ENCODE measurements at regions of chr10 and their contacts with region 1.

Region 1: DNA sequence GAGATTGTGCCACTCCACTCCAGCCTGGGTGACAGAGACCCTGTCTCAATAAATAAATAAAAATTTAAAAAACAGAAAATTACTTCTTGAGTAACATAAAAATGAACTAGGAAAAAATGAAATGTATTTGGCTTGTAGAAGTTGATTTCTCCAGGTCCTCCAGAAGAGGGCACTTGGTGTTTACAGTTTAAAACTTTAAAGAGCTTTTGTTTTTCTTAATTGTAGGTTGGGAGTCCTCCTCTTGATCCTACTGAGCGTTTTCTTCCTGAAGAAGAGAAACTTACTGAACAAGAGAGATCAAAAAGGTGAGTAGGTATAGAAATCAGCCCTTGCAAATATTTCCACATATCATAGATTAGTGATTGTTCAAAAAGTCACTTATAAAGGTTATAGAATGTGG is 16.2 kb downstream of the KIFBP start:
- DNase-seq: no peak
- ATAC-seq: peak; percentile 78
- H3K4me3 Mint-ChIP-seq: no peak overlapping the region
- H3K27ac Mint-ChIP-seq: no peak overlapping the region
- H3K4me1 Mint-ChIP-seq: peaks cover 10% of the 10 kb centered on the region
- H3K27me3 Mint-ChIP-seq: no peaks in the 10 kb centered on the region

Region 2: GRCh38 chr10:68955832-68956532 is 48.8 kb before region 1 on chr10 and contains the start of gene DDX21:
- CTCF ChIA-PET with region 1: no interaction called
- POLR2A ChIA-PET with region 1: no interaction called
- intact Hi-C with region 1: no loop called
- DNase-seq: peak; percentile 94
- ATAC-seq: peak; percentile 85
- H3K4me3 Mint-ChIP-seq: peak within 1 kb of the TSS; percentile 98
- H3K27ac Mint-ChIP-seq: peak within 1 kb of the TSS; percentile 100
- H3K4me1 Mint-ChIP-seq: peaks cover 35% of the 10 kb centered on the region
- H3K27me3 Mint-ChIP-seq: no peaks in the 10 kb centered on the region
- total RNA-seq, gene DDX21: 187 to 192 TPM

Region 3: DNA sequence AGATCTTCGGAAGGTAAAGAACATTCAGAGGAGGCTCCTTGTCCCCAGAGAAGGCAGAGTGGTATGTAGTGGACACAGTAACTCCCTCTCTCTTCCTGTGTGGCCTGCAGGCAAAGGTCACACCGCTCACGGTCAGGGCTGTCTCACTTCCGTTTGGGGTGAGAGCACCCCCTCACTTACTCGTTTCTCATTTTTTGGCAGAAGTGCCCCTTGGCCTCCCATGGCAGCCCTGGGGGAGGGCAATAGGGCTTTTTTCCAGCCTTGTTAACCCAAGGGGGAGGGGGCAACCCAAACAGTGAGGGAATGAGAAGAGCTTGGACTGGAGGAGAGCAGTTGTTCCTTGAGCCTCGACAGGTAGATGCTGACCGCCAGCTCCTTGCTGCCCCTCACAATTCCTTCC is 51.3 kb after region 1 on chr10:
- CTCF ChIA-PET with region 1: interaction called, 4 read pairs
- POLR2A ChIA-PET with region 1: no interaction called
- intact Hi-C with region 1: loop called in 1 of 2 experiments (anchors 2 kb)
- DNase-seq: peak; percentile 34
- ATAC-seq: no peak
- H3K4me3 Mint-ChIP-seq: no peak overlapping the region
- H3K27ac Mint-ChIP-seq: peak overlapping the region; percentile 82
- H3K4me1 Mint-ChIP-seq: peaks cover 55% of the 10 kb centered on the region
- H3K27me3 Mint-ChIP-seq: no peaks in the 10 kb centered on the region

Region 4: GRCh38 chr10:69087590-69088470 is 83.0 kb after region 1 on chr10 and contains the start of gene SRGN:
- CTCF ChIA-PET with region 1: interaction called, 179 read pairs
- POLR2A ChIA-PET with region 1: interaction called, 10 read pairs
- intact Hi-C with region 1: loop called (anchors 1 kb)
- DNase-seq: peak; percentile 87
- ATAC-seq: peak; percentile 57
- H3K4me3 Mint-ChIP-seq: peak within 1 kb of the TSS; percentile 86
- H3K27ac Mint-ChIP-seq: peak within 1 kb of the TSS; percentile 99
- H3K4me1 Mint-ChIP-seq: peaks cover 55% of the 10 kb centered on the region
- H3K27me3 Mint-ChIP-seq: no peaks in the 10 kb centered on the region
- total RNA-seq, gene SRGN: 375 to 400 TPM

Region 5: GRCh38 chr10:69100136-69100872 is 95.5 kb after region 1 on chr10:
- CTCF ChIA-PET with region 1: interaction called, 179 read pairs
- POLR2A ChIA-PET with region 1: interaction called, 7 read pairs
- intact Hi-C with region 1: no loop called
- DNase-seq: no peak
- ATAC-seq: no peak
- H3K4me3 Mint-ChIP-seq: no peak overlapping the region
- H3K27ac Mint-ChIP-seq: no peak overlapping the region
- H3K4me1 Mint-ChIP-seq: peaks cover 46% of the 10 kb centered on the region
- H3K27me3 Mint-ChIP-seq: no peaks in the 10 kb centered on the region

Region 6: GRCh38 chr10:69506834-69507721 is 502.3 kb after region 1 on chr10:
- CTCF ChIA-PET with region 1: no interaction called
- POLR2A ChIA-PET with region 1: no interaction called
- intact Hi-C with region 1: loop called in 1 of 2 experiments (anchors 10 kb)
- DNase-seq: peak; percentile 17
- ATAC-seq: peak; percentile 33
- H3K4me3 Mint-ChIP-seq: peak overlapping the region; percentile 60
- H3K27ac Mint-ChIP-seq: peak overlapping the region; percentile 89
- H3K4me1 Mint-ChIP-seq: peaks cover 11% of the 10 kb centered on the region
- H3K27me3 Mint-ChIP-seq: no peaks in the 10 kb centered on the region

Measured in activated CD4-positive, alpha-beta T cell treated with anti-CD3 and anti-CD28 coated beads for 36 hours (primary cell).